CD8-positive, alpha-beta T cell (primary cell): ENCODE measurements at regions of chr1 and their contacts with region 1.

Region 1: GRCh38 chr1:23916209-23917131 is 3.3 kb upstream of the CNR2 start:
- DNase-seq: peak; percentile 36 to 86 (median 63)
- ATAC-seq: peak; percentile 98
- H3K4me3 ChIP-seq: no peak overlapping the region
- H3K4me3 Mint-ChIP-seq: no peak overlapping the region
- H3K27ac ChIP-seq: no peak overlapping the region
- H3K27ac Mint-ChIP-seq: no peak overlapping the region
- H3K4me1 ChIP-seq: peaks cover 35% of the 10 kb centered on the region
- H3K4me1 Mint-ChIP-seq: peaks cover 36% of the 10 kb centered on the region
- H3K27me3 ChIP-seq: no peaks in the 10 kb centered on the region
- H3K27me3 Mint-ChIP-seq: no peaks in the 10 kb centered on the region
- CTCF ChIP-seq: peak; percentile 86

Region 2: DNA sequence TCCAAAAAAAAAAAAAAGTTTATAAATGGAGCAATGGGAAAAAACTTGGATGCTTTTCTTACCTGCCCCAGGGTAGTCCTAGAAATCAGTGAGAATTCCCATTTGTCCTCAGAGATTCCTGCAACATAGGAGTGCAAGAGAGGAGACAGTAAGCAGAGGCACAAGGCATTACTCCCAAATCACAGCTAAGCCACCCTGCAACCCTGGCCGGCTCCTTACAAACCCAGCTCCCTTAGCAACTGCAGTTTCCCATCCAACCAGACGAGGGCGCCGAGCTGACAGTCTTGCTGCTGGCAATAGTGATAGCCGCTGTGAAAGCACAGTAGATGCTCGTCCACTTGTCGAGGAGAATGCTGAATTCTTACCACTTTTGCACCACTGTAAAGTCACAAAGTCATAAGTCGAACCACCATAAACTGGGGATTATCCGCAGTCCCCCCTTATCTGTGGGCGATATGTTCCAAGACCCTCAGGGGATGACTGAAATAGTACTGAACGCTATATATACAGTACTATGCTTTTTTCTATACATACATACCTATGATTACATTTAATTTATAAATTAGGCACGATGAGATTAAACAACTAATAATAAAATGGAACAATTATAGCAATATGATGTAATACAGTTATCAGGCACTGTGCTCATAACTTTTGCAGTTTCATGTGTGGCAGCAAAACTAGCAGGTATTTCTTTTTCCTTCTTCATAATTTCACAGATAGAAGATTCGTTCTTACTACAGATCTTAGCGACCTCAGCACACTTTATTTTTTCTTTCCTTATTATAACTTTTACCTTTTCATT is 144.2 kb before region 1 on chr1:
- CTCF ChIA-PET with region 1: interaction called, 53 read pairs
- POLR2A ChIA-PET with region 1: no interaction called
- intact Hi-C with region 1: loop called in 1 of 2 experiments (anchors 1 kb)
- DNase-seq: peak; percentile 73 to 89 (median 85)
- ATAC-seq: peak; percentile 99
- H3K4me3 ChIP-seq: no peak overlapping the region
- H3K4me3 Mint-ChIP-seq: no peak overlapping the region
- H3K27ac ChIP-seq: no peak overlapping the region
- H3K27ac Mint-ChIP-seq: no peak overlapping the region
- H3K4me1 ChIP-seq: peaks cover 2% of the 10 kb centered on the region
- H3K4me1 Mint-ChIP-seq: peaks cover 27% of the 10 kb centered on the region
- H3K27me3 ChIP-seq: no peaks in the 10 kb centered on the region
- H3K27me3 Mint-ChIP-seq: no peaks in the 10 kb centered on the region
- CTCF ChIP-seq: peak; percentile 94

Region 3: GRCh38 chr1:23897083-23897482 is 19.4 kb before region 1 on chr1:
- CTCF ChIA-PET with region 1: interaction called, 10 read pairs
- POLR2A ChIA-PET with region 1: interaction called, 3 read pairs
- intact Hi-C with region 1: no loop called
- DNase-seq: no peak
- ATAC-seq: no peak
- H3K4me3 ChIP-seq: no peak overlapping the region
- H3K4me3 Mint-ChIP-seq: no peak overlapping the region
- H3K27ac ChIP-seq: peak overlapping the region in 1 of 2 experiments; percentile 36
- H3K27ac Mint-ChIP-seq: no peak overlapping the region
- H3K4me1 ChIP-seq: peaks cover 19% of the 10 kb centered on the region
- H3K4me1 Mint-ChIP-seq: peaks cover 31% of the 10 kb centered on the region
- H3K27me3 ChIP-seq: no peaks in the 10 kb centered on the region
- H3K27me3 Mint-ChIP-seq: no peaks in the 10 kb centered on the region
- CTCF ChIP-seq: no peak

Region 4: GRCh38 chr1:24003331-24003972 is 87.0 kb after region 1 on chr1:
- CTCF ChIA-PET with region 1: no interaction called
- POLR2A ChIA-PET with region 1: no interaction called
- intact Hi-C with region 1: no loop called
- DNase-seq: no peak
- ATAC-seq: no peak
- H3K4me3 ChIP-seq: no peak overlapping the region
- H3K4me3 Mint-ChIP-seq: no peak overlapping the region
- H3K27ac ChIP-seq: no peak overlapping the region
- H3K27ac Mint-ChIP-seq: no peak overlapping the region
- H3K4me1 ChIP-seq: no peaks in the 10 kb centered on the region
- H3K4me1 Mint-ChIP-seq: no peaks in the 10 kb centered on the region
- H3K27me3 ChIP-seq: peaks cover 0 to 3% of the 10 kb centered on the region in 2 experiments
- H3K27me3 Mint-ChIP-seq: peaks cover 3% of the 10 kb centered on the region
- CTCF ChIP-seq: no peak